A673 (cell line): ENCODE measurements at regions of chr7 and their contacts with region 1.

Region 1: DNA sequence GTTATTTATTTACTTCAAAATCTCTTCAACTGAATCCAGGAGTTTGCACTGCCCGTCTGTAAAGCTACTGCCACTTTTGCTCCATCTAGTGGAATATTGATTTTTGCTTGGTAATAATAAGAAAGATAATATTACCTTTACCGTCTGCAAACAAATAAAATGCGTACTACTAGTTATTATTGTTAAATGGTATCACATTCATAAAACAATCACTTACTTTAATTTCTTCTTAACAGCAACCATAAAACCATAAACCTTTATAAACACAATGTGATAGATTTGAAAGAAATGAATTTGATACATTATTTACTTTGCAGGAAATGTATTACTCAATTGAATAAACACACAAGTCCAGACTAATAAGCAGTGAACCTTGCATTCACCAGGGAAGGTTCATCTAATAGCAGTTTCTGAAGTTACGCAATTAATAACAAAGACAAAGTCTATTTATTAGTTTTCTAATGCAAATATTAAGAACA is 6.4 kb downstream of the AGMO start:
- DNase-seq: no peak
- H3K4me3 ChIP-seq: no peak overlapping the region
- H3K27ac ChIP-seq: no peak overlapping the region
- H3K4me1 ChIP-seq: peaks cover 9% of the 10 kb centered on the region
- H3K27me3 ChIP-seq: no peaks in the 10 kb centered on the region
- CTCF ChIP-seq: peak; percentile 37; the same call in 1 of the 2 replicates

Region 2: DNA sequence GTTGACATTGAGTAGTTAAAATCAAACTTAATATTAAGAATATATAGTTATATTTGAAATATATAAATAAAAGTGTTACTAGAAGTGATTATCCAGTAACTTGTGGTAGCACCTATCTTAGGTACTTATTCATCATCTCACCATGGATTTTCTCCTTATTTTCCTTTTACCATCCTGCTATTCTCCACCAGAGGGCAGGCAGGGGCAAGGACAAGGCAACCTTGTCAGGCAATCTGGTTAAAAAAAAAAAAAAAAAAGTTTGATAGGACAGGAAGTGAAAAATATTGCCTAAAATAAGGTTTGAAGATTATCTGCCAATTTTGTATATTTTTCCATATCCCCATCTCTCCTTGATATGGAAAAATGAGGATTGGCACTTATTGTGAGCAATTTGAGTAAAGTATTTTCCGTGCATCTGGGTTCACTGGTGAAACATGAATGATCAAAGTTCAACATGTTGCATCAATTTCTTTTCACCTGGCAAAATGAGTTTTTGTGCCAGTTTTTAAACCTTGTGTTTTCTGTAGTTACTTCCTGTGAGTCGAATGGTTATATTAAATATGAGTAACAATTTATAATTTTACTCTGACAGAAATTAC is 250.3 kb before region 1 on chr7:
- CTCF ChIA-PET with region 1: no interaction called
- POLR2A ChIA-PET with region 1: no interaction called
- intact Hi-C with region 1: loop called (anchors 5 kb)
- DNase-seq: peak; percentile 69
- H3K4me3 ChIP-seq: no peak overlapping the region
- H3K27ac ChIP-seq: no peak overlapping the region
- H3K4me1 ChIP-seq: peaks cover 6% of the 10 kb centered on the region
- H3K27me3 ChIP-seq: no peaks in the 10 kb centered on the region
- CTCF ChIP-seq: peak; percentile 77

Region 3: GRCh38 chr7:15581352-15581951 is 26.0 kb after region 1 on chr7:
- CTCF ChIA-PET with region 1: no interaction called
- POLR2A ChIA-PET with region 1: no interaction called
- intact Hi-C with region 1: no loop called
- DNase-seq: no peak
- H3K4me3 ChIP-seq: no peak overlapping the region
- H3K27ac ChIP-seq: no peak overlapping the region
- H3K4me1 ChIP-seq: no peaks in the 10 kb centered on the region
- H3K27me3 ChIP-seq: no peaks in the 10 kb centered on the region
- CTCF ChIP-seq: no peak